HCT116 (cell line): ENCODE measurements at regions of chr2 and their contacts with region 1.

Region 1: GRCh38 chr2:52181080-52181479 is 1149.1 kb upstream of the NRXN1 start:
- DNase-seq: no peak
- ATAC-seq: no peak
- H3K4me3 ChIP-seq: no peak overlapping the region
- H3K27ac ChIP-seq: no peak overlapping the region
- H3K4me1 ChIP-seq: no peaks in the 10 kb centered on the region
- H3K27me3 ChIP-seq: no peaks in the 10 kb centered on the region
- CTCF ChIP-seq: no peak
- POLR2A ChIP-seq: no peak
- RAD21 ChIP-seq: no peak

Region 2: GRCh38 chr2:52139241-52139640 is 41.8 kb before region 1 on chr2:
- CTCF ChIA-PET with region 1: no interaction called
- POLR2A ChIA-PET with region 1: no interaction called
- RAD21 ChIA-PET with region 1: no interaction called
- intact Hi-C with region 1: loop called (anchors 1 kb)
- DNase-seq: no peak
- ATAC-seq: no peak
- H3K4me3 ChIP-seq: no peak overlapping the region
- H3K27ac ChIP-seq: no peak overlapping the region
- H3K4me1 ChIP-seq: no peaks in the 10 kb centered on the region
- H3K27me3 ChIP-seq: no peaks in the 10 kb centered on the region
- CTCF ChIP-seq: no peak
- POLR2A ChIP-seq: no peak
- RAD21 ChIP-seq: no peak